ENCODE measurements at regions of chr17 and their contacts with region 1.

Region 1: GRCh38 chr17:57855391-57856035 is 5.7 kb upstream of the MRPS23 start:
- DNase-seq: no peak
- H3K4me3 ChIP-seq: no peak overlapping the region
- CTCF ChIP-seq: no peak

Region 2: DNA sequence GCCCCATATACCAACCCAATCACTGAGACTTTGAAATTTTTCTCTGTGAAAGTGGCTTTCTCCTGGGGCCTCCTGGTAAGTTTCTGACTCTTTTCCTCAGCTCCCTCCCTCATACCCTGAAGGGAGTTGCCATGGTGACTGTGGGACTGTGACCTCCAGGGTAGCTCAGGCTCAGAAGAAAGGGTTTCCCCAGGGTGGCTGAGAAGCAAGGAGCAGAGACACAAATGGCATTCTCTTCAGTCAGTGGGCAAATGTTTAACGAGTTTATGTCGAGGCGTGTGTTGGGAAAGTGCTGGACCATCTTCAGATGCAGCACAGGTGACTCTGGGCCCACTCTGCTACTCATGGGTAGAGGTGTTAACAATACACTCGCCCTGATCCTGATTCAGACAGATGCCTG is 52.5 kb before region 1 on chr17:
- in situ Hi-C with region 1: no loop called
- DNase-seq: no peak
- H3K4me3 ChIP-seq: no peak overlapping the region
- CTCF ChIP-seq: no peak

Region 3: GRCh38 chr17:57927048-57927723 is 71.7 kb after region 1 on chr17:
- in situ Hi-C with region 1: loop called (anchors 5 kb)
- DNase-seq: no peak
- H3K4me3 ChIP-seq: no peak overlapping the region
- CTCF ChIP-seq: no peak

Region 4: GRCh38 chr17:57993471-57994365 is 138.2 kb after region 1 on chr17:
- in situ Hi-C with region 1: loop called (anchors 5 kb)
- DNase-seq: no peak
- H3K4me3 ChIP-seq: no peak overlapping the region
- CTCF ChIP-seq: no peak

Measured in astrocyte of the cerebellum (primary cell).